Aorta (tissue), 5 donors: ENCODE measurements at regions of chr10 and their contacts with region 1.

Region 1: GRCh38 chr10:18312374-18313139 is 172.3 kb downstream of the CACNB2 start:
- DNase-seq: no peak
- ATAC-seq: peak; percentile 82
- H3K4me3 ChIP-seq: peak overlapping the region; percentile 11 to 95
- H3K27ac ChIP-seq: peak overlapping the region; percentile 28 to 37
- H3K4me1 ChIP-seq: peaks cover 0 to 3% of the 10 kb centered on the region in 2 donors
- H3K27me3 ChIP-seq: no peaks in the 10 kb centered on the region

Region 2: GRCh38 chr10:17910125-17910789 is 402.3 kb before region 1 on chr10:
- intact Hi-C with region 1: loop called in 1 of 2 experiments (anchors 5 kb)
- DNase-seq: no peak
- ATAC-seq: no peak
- H3K4me3 ChIP-seq: no peak overlapping the region
- H3K27ac ChIP-seq: no peak overlapping the region
- H3K4me1 ChIP-seq: no peaks in the 10 kb centered on the region
- H3K27me3 ChIP-seq: no peaks in the 10 kb centered on the region

Region 3: GRCh38 chr10:18254086-18254485 is 58.5 kb before region 1 on chr10:
- intact Hi-C with region 1: no loop called
- DNase-seq: no peak
- ATAC-seq: no peak
- H3K4me3 ChIP-seq: no peak overlapping the region
- H3K27ac ChIP-seq: no peak overlapping the region
- H3K4me1 ChIP-seq: peaks cover 0 to 3% of the 10 kb centered on the region in 2 donors
- H3K27me3 ChIP-seq: no peaks in the 10 kb centered on the region

Region 4: DNA sequence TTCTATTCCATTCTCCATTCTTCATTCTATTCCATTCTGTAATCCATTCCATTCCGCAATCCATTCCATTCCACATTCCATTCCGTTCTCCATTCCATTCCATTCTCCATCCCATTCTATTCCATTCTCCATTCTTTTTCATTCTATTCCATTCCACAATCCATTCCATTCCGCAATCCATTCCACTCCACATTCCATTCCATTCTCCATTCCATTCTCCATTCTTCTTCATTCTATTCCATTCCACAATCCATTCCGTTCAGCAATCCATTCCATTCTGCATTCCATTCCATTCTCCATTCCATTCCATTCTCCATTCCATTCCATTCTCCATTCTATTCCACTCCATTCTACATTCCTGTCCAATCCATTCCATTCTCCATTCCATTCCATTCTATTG is 253.6 kb after region 1 on chr10:
- intact Hi-C with region 1: no loop called
- DNase-seq: no peak
- ATAC-seq: no peak
- H3K4me3 ChIP-seq: no peak overlapping the region
- H3K27ac ChIP-seq: no peak overlapping the region
- H3K4me1 ChIP-seq: no peaks in the 10 kb centered on the region
- H3K27me3 ChIP-seq: no peaks in the 10 kb centered on the region